Pancreas (tissue), 10 donors: ENCODE measurements at regions of chrX and their contacts with region 1.

Region 1: DNA sequence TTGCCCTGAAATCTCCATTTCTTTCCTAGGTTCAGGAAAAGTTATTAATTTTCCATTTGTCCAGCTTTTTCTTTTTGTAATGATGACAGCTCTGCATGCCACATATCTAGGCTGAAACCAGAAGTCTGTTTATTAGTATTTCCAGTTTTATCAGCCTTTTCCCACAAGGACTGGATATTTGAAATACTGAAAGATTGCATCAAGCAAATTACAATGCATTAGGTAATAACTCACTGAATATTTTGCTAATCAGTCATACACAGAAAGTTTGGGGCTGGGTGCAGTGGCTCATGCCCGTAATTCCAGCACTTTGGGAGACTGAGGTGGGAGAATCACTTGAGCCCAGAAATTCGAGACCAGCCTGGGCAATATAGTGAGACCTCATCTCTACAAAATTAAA is 21.4 kb downstream of the SLC9A7 start:
- DNase-seq: no peak
- ATAC-seq: peak in 2 of 4 donors; percentile 36 to 37
- H3K4me3 ChIP-seq: no peak overlapping the region
- H3K27ac ChIP-seq: no peak overlapping the region
- H3K4me1 ChIP-seq: no peaks in the 10 kb centered on the region
- H3K27me3 ChIP-seq: no peaks in the 10 kb centered on the region
- CTCF ChIP-seq: no peak

Region 2: GRCh38 chrX:46500054-46500453 is 237.4 kb before region 1 on chrX:
- intact Hi-C with region 1: no loop called
- DNase-seq: no peak
- ATAC-seq: no peak
- H3K4me3 ChIP-seq: no peak overlapping the region
- H3K27ac ChIP-seq: no peak overlapping the region
- H3K4me1 ChIP-seq: no peaks in the 10 kb centered on the region
- H3K27me3 ChIP-seq: no peaks in the 10 kb centered on the region
- CTCF ChIP-seq: no peak

Region 3: DNA sequence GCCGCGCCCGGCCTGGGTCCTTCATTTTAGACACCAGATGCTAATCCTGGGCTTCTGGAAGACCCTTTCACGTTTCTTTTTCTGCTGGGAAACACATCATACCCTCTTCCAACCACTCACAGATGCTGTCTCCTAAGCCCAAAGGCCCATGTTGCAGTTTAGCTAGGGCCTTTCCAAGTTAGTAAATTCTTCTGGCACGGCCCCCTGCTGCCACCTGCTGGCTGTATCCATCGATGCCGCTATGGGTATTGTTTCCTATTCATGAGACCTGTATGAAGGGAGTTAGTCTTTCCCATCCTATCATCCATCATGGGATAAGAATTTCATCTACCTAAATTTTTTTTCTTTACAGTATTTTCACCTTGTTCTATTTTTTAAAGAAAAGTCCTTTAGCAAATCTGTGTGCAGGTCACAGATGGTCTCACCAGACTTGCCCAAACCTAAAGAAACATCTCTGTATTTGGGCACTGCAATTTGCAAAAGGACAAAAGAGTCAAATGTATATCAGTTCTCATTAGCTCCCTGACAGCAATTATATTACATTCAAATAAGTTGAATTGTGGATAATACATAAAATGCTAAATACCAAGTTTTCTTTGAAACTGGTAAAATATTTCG is 59.2 kb after region 1 on chrX:
- intact Hi-C with region 1: loop called in 1 of 3 experiments (anchors 10 kb)
- DNase-seq: peak; percentile 52 to 88 (median 76)
- ATAC-seq: peak; percentile 67 to 90 (median 86)
- H3K4me3 ChIP-seq: no peak overlapping the region
- H3K27ac ChIP-seq: no peak overlapping the region
- H3K4me1 ChIP-seq: peaks cover 0 to 4% (median 0%) of the 10 kb centered on the region in 3 donors
- H3K27me3 ChIP-seq: peaks cover 0 to 6% (median 0%) of the 10 kb centered on the region in 4 donors
- CTCF ChIP-seq: peak; percentile 60 to 75 (median 67)